ENCODE measurements at regions of chr15 and their contacts with region 1.

Region 1: GRCh38 chr15:57769266-57769665 is 62.8 kb downstream of the POLR2M start:
- DNase-seq: peak; percentile 76 to 79
- ATAC-seq: peak; percentile 87 to 99 (median 96)
- H3K4me3 ChIP-seq: no peak overlapping the region
- H3K27ac ChIP-seq: peak overlapping the region in 8 of 10 donors; percentile 17 to 65 (median 40)
- H3K4me1 ChIP-seq: peaks cover 0 to 12% (median 0%) of the 10 kb centered on the region in 9 donors
- H3K27me3 ChIP-seq: no peaks in the 10 kb centered on the region
- CTCF ChIP-seq: no peak

Region 2: DNA sequence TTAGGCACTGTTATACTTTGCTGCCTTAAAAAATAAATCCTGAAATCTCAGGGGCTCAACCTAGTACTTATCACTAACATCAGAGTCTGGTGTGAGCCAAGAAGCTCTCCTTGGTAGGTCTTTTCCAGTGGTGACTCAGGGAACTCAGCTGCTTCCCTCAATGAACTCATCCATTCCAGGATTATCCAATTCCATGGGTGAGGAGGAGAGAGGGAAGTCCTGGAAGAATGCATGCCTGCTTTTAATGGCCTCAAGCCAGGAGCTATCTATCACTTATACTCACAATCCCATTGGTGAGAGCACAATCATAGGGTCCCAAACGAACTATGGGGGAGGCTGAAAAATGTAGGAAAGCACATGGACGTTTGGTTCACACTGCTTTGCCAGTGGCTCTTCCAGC is 50.9 kb after region 1 on chr15:
- intact Hi-C with region 1: loop called in 1 of 10 experiments (anchors 10 kb)
- DNase-seq: no peak
- ATAC-seq: no peak
- H3K4me3 ChIP-seq: no peak overlapping the region
- H3K27ac ChIP-seq: no peak overlapping the region
- H3K4me1 ChIP-seq: peaks cover 0 to 5% (median 0%) of the 10 kb centered on the region in 9 donors
- H3K27me3 ChIP-seq: no peaks in the 10 kb centered on the region
- CTCF ChIP-seq: no peak

Measured in heart right ventricle (tissue), 16 donors.